GM10248 (cell line): ENCODE measurements at regions of chrX and their contacts with region 1.

Region 1: DNA sequence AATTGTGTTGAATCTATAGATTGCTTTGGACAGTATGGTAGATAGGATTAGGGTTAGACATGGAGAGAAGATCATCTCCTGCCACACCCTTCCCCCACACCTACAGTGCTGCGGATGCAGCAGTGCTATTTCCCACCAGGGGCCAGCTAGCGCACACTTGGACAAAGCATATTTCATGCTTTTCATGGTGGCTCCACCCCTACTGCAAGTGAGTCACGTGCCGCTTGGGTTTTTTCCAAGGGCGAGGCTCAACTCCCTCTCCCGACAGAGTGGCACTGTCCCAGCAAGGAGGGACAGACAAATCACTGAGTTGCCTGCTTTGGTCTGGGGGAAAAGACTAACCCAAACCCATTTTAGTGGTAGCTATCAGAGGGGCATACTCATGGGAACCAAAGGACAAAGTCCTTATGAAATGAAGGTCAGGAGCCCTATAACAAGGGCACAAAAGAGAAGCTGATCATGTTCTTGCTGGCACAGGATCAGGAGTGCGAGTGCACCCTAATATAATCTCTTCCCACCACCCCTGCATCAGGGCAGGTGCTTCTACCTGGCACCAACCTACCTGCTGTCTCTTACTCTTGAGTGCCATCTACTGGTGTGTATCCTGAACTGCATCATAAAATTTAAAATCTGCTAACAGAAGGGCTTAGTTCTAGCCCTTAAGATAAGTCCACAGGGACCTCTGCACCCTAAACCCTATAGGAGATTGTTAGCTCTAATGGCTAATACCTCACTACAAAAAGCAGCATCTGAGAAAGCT is 55.1 kb upstream of the PGAM4 start:
- DNase-seq: peak; percentile 45
- CTCF ChIP-seq: peak; percentile 50

Region 2: DNA sequence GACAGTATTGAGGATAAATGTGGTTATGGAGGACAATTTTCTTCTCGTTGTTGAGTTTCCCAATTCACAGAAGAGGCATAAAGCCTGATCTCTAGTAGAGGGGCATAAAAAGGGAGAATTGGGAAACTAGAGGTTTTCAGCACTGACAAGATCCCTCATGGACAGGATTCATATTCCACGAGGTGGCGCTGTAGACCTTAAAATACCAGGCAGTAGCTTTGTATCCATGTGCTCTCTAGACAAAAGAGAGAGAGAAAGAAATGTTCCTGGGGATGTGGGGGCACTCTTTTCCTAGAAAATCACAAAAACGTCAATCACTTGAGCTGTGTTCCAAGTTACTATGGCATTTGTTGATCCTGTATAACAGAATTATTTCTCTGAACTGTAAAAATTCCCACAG is 1468.7 kb before region 1 on chrX:
- CTCF ChIA-PET with region 1: interaction called, 10 read pairs
- POLR2A ChIA-PET with region 1: no interaction called
- DNase-seq: no peak
- CTCF ChIP-seq: no peak

Region 3: DNA sequence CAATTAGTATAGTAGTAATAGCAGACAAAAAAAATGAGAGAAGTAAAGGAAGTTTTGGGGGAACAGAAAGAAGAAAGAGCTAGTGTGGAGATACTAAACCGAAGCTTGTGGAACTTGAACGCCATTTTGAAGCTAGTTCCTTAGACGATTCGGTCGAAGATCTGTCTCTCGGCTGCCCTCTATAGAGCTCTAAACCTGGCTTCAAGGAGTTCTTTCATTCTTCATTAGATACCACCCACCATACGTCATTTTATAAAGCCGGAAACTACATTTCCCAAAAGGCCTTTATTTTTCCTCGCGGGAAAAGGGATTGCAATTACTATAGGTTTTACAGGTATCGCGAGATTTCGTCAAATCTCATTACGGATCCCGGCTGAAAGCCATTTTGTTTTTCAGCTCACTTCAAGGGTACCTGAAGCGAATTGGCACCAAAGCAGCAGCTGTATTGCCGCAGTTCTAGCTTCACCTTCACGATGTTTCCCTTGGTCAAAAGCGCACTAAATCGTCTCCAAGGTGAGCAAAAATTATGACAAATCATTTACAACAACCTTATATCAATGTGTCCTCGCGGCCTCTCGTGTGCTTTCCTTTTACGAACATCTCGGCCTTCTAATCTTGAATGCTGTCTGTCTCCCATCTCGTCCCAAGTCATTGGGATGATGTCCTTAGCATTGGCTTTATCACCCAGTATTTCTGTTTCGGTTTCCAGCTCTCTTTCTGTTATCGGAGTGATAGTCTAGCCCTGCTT is 125.3 kb before region 1 on chrX and contains the start of gene COX7B:
- CTCF ChIA-PET with region 1: interaction called, 11 read pairs
- POLR2A ChIA-PET with region 1: no interaction called
- DNase-seq: peak; percentile 59
- CTCF ChIP-seq: peak; percentile 36

Region 4: DNA sequence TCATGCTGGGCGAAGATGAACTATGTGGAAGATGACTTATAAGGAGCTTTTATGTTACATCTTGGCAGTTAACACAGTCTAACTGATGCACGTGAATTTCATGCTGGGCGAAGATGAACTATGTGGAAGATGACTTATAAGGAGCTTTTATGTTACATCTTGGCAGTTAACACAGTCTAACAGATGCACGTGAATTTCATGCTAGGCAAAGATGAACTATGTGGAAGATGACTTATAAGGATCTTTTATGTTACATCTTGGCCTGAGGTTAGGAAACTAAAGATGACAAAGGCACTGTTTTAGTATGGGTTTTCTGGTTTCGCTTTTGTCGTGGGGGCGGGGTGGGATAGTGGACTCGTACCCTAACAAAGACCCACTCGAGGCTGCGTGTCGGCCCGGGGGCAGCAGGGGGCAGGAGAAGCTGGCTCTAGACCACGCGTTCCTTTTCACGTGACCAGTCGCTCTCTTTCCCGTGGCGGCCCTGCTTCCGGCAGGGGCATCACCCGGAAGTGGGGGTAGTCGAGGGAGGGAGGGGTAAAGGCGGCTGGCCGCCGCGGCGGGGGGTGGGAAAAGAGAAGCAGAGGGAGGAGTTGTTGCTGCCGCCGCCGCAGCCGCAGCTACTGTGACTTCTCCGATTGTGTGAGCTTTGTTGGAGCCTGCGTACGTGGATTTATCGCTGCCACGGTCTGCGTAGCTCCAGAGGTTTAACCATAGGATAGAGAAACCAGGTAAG is 114.3 kb before region 1 on chrX and contains the start of gene ATP7A:
- CTCF ChIA-PET with region 1: interaction called, 16 read pairs
- POLR2A ChIA-PET with region 1: no interaction called
- DNase-seq: peak; percentile 85
- CTCF ChIP-seq: peak; percentile 56

Region 5: DNA sequence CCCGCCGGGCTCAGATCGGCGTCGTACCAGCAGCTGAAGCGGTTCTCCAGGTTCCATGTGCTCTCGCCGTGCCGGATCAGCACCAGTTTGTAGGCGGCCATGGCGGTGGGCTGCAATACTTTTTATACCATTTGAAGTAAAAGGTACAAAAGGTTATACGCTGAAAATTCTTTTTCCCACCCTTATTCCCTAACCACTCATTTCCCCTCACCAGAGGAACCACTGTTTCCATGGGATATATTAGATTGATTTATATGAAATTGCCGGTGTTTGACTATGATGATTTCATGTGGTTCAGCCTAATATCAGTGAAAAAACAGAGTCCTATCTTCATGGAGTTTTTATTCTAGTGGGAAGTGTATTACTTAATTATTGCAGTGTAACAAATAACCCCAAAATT is 55.0 kb before region 1 on chrX and contains the start of gene PGAM4:
- CTCF ChIA-PET with region 1: no interaction called
- POLR2A ChIA-PET with region 1: no interaction called
- DNase-seq: no peak
- CTCF ChIP-seq: no peak

Region 6: DNA sequence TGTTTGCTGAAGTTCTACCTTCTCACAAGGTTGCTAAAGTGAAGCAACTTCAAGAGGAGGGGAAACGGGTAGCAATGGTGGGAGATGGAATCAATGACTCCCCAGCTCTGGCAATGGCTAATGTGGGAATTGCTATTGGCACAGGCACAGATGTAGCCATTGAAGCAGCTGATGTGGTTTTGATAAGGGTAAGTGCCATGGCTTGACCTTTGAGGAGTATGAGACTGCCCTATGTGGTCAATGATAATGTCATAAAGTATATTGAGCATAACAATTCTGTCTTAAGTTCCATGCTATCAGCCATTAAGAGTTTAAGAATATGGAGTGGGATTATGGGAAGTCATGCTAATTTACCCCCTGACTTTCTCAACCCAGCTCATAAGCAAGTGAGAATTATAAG is 18.1 kb after region 1 on chrX:
- CTCF ChIA-PET with region 1: interaction called, 10 read pairs
- POLR2A ChIA-PET with region 1: no interaction called
- DNase-seq: no peak
- CTCF ChIP-seq: no peak

Region 7: DNA sequence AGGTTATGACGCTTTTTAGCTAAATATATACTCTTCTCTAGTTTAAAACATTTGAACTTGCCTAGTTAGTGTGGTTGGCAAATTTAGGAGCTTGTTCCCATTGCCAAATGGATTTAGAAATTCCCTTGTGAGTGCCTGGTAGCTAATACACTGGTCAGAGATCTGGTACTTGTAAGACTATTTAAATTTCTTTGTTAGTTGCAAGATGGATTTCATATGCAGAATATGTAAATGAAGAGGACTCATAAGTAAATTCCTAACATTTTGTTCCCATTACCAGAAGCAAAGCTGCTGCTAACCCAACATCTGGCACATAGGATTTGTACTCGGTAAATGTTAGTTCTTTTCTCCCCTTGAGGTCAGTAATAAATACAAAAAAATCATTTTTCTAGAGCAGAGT is 23.5 kb after region 1 on chrX:
- CTCF ChIA-PET with region 1: interaction called, 10 read pairs
- POLR2A ChIA-PET with region 1: no interaction called
- DNase-seq: no peak
- CTCF ChIP-seq: no peak